Activated CD4-positive, alpha-beta T cell treated with anti-CD3 and anti-CD28 coated beads for 36 hours (primary cell): ENCODE measurements at regions of chr9 and their contacts with region 1.

Region 1: DNA sequence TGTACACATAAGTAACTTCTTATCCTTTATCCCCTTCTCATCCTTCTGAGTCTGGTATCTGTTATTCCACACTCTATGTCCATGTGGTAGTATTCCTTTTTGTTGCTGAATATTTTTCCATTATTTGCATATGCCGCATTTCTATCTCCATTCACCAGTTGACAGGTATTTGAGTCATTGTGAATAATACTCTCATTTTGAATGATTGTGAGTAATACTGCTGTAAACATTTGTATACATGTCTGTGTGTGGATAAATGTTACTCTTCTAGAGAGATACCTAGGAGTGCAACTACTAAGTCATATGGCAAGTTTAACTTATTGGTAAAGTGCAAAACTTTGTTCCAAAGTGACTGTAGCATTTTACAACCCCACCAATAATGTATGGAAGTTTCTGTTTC is 15.6 kb downstream of the RIC1 start:
- DNase-seq: no peak
- ATAC-seq: peak; percentile 89
- H3K4me3 Mint-ChIP-seq: no peak overlapping the region
- H3K27ac Mint-ChIP-seq: peak overlapping the region; percentile 16
- H3K4me1 Mint-ChIP-seq: peaks cover 34% of the 10 kb centered on the region
- H3K27me3 Mint-ChIP-seq: no peaks in the 10 kb centered on the region

Region 2: DNA sequence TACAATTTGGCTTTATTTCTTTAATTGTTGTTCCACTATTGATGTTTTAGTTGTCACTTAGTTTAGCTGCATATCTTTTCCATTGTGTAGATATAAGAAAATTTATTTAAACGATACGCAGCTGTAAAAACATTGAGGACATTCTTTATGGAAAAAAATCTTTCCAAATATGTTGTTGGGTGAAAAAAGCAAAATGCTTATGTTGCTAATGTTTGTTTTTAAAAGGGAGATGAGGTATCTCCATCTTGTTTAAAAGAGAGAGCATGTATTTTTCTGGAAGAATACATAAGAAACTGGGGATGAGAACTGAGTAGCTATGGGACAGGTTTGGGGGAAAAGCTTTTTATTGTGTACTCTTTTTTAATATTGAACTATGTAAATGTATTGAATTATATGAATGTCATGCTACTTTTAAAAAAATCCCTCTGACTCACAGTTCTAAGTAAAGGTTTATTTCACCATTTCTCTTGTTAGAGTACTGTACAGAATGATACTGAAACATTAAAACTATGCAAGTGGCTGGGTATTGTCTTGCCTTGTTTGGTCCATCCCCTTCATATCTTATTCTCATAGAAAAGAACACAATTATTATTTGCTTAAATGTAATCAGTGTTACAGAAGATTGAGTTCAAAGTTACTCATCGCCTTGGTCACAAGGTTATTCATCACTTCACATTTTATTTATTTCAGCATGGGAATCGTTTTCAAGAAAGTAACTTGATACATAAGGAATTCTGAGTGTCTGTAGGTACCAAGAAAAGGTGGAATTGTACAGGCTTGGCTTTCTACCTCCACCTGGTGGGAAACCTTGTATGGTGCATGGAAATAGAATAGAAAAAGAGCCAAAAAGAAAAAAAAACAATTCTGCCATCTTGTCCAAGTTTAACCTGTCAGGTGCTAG is 70.2 kb after region 1 on chr9:
- CTCF ChIA-PET with region 1: no interaction called
- POLR2A ChIA-PET with region 1: no interaction called
- intact Hi-C with region 1: loop called in 1 of 2 experiments (anchors 5 kb)
- DNase-seq: no peak
- ATAC-seq: peak; percentile 76
- H3K4me3 Mint-ChIP-seq: no peak overlapping the region
- H3K27ac Mint-ChIP-seq: peak overlapping the region; percentile 62
- H3K4me1 Mint-ChIP-seq: peaks cover 12% of the 10 kb centered on the region
- H3K27me3 Mint-ChIP-seq: no peaks in the 10 kb centered on the region